ENCODE measurements at regions of chr3 and their contacts with region 1.

Region 1: DNA sequence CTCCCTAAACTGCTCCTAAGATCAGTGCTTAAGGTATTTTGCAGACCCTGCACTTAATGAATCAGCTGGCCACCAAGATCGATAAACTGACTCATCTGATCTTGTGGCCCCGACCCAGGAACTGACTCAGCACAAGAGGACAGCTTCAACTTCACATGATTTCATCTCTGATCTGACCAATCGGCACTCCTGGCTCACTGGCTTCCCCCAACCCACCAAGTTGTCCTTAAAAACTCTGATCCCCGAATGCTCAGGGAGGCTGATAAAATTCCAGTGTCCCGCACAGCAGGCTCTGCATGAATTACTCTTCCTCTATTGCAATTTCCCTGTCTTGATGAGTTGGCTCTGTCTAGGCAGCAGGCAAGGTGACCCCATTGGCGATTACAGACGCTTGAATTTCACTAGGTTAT is 13.5 kb downstream of the HTR3E start:
- DNase-seq: no peak
- ATAC-seq: no peak
- H3K4me3 ChIP-seq: no peak overlapping the region
- H3K4me3 Mint-ChIP-seq: no peak overlapping the region
- H3K27ac ChIP-seq: no peak overlapping the region
- H3K27ac Mint-ChIP-seq: no peak overlapping the region
- H3K4me1 ChIP-seq: no peaks in the 10 kb centered on the region
- H3K4me1 Mint-ChIP-seq: no peaks in the 10 kb centered on the region
- H3K27me3 ChIP-seq: peaks cover 0 to 12% of the 10 kb centered on the region in 2 experiments
- H3K27me3 Mint-ChIP-seq: peaks cover 5 to 10% of the 10 kb centered on the region in 2 donors

Region 2: DNA sequence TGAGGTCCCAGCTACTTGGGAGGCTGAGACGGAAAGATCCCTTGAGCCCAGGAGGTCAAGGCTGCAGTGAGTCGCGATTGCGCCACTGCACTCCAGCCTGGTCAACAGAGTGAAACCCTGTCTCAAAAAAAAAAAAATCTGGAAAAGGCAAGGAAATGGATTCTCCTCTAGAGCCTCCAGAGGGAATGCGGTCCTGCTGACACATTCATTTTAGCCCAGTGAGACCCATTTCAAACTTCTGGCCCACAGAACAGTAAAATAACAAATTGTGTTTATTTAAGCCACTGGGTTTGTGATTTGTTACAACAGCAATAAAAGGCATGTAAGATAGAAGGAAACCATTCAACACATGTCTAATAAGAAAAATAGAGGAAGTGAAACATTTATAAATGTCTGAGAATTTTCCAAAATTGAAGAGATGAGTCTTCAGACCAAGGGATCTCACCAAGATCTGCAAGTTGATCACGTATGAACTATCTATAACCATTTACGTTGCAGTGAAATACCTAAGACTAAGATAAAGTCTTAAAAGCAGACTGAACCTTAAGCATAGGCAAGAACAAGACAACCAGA is 13.4 kb before region 1 on chr3 and contains the start of gene HTR3E:
- CTCF ChIA-PET with region 1: interaction called in 1 of 2 experiments, 17 read pairs
- POLR2A ChIA-PET with region 1: no interaction called
- DNase-seq: no peak
- ATAC-seq: no peak
- H3K4me3 ChIP-seq: no peak within 1 kb of the TSS
- H3K4me3 Mint-ChIP-seq: no peak within 1 kb of the TSS
- H3K27ac ChIP-seq: no peak within 1 kb of the TSS
- H3K27ac Mint-ChIP-seq: no peak within 1 kb of the TSS
- H3K4me1 ChIP-seq: no peaks in the 10 kb centered on the region
- H3K4me1 Mint-ChIP-seq: no peaks in the 10 kb centered on the region
- H3K27me3 ChIP-seq: peaks cover 0 to 14% of the 10 kb centered on the region in 2 experiments
- H3K27me3 Mint-ChIP-seq: peaks cover 8 to 9% of the 10 kb centered on the region in 2 donors
- total RNA-seq, gene HTR3E: not detected

Region 3: DNA sequence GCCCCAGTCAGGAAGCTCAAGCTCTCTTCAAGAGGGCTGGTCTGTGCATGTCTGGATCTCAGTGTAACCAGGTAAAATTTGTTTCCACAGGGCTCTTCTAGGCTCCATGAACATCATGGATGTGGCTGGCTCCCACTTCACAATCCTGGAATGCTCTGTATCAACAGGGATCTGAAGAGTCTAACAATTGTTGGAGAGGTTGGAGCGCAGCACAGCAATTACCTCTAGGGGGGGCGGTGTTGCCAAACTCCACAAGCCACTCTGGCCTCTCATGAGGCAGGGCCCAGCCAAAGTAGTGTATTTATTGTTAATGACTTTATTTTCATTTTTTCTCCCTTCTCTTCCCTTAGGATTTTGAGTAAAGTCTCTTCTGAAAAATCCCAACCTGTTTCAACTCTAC is 18.7 kb after region 1 on chr3:
- CTCF ChIA-PET with region 1: interaction called in 1 of 2 experiments, 10 read pairs
- POLR2A ChIA-PET with region 1: no interaction called
- DNase-seq: peak in 1 of 35 experiments; percentile 6
- ATAC-seq: peak in 1 of 4 experiments; percentile 46
- H3K4me3 ChIP-seq: no peak overlapping the region
- H3K4me3 Mint-ChIP-seq: no peak overlapping the region
- H3K27ac ChIP-seq: no peak overlapping the region
- H3K27ac Mint-ChIP-seq: no peak overlapping the region
- H3K4me1 ChIP-seq: peaks cover 0 to 5% of the 10 kb centered on the region in 2 experiments
- H3K4me1 Mint-ChIP-seq: peaks cover 6 to 9% (median 7%) of the 10 kb centered on the region in 3 donors
- H3K27me3 ChIP-seq: peaks cover 0 to 13% of the 10 kb centered on the region in 2 experiments
- H3K27me3 Mint-ChIP-seq: peaks cover 0 to 2% of the 10 kb centered on the region in 2 donors

Region 4: GRCh38 chr3:184354121-184354728 is 243.9 kb after region 1 on chr3:
- CTCF ChIA-PET with region 1: interaction called in 1 of 2 experiments, 20 read pairs
- POLR2A ChIA-PET with region 1: no interaction called
- DNase-seq: peak in 27 of 35 experiments; percentile 21 to 76 (median 49)
- ATAC-seq: peak; percentile 63 to 82 (median 78)
- H3K4me3 ChIP-seq: no peak overlapping the region
- H3K4me3 Mint-ChIP-seq: no peak overlapping the region
- H3K27ac ChIP-seq: no peak overlapping the region
- H3K27ac Mint-ChIP-seq: no peak overlapping the region
- H3K4me1 ChIP-seq: peaks cover 0 to 10% of the 10 kb centered on the region in 2 experiments
- H3K4me1 Mint-ChIP-seq: peaks cover 0 to 4% (median 0%) of the 10 kb centered on the region in 3 donors
- H3K27me3 ChIP-seq: peaks cover 0 to 3% of the 10 kb centered on the region in 2 experiments
- H3K27me3 Mint-ChIP-seq: no peaks in the 10 kb centered on the region

Measured in T-cell (primary cell).